CD4-positive, alpha-beta T cell (primary cell): ENCODE measurements at regions of chr11 and their contacts with region 1.

Region 1: GRCh38 chr11:18526521-18527296 is at the start of gene TSG101:
- DNase-seq: peak; percentile 86 to 96 (median 89)
- ATAC-seq: peak; percentile 82
- H3K4me3 ChIP-seq: peak within 1 kb of the TSS; percentile 88
- H3K4me3 Mint-ChIP-seq: peak within 1 kb of the TSS; percentile 100
- H3K27ac ChIP-seq: peak within 1 kb of the TSS; percentile 99 to 100
- H3K27ac Mint-ChIP-seq: peak within 1 kb of the TSS; percentile 100
- H3K4me1 ChIP-seq: peaks cover 31% of the 10 kb centered on the region
- H3K4me1 Mint-ChIP-seq: peaks cover 70% of the 10 kb centered on the region
- H3K27me3 ChIP-seq: no peaks in the 10 kb centered on the region
- H3K27me3 Mint-ChIP-seq: no peaks in the 10 kb centered on the region
- CTCF ChIP-seq: no peak
- total RNA-seq, gene TSG101: 23.5 to 30.1 TPM

Region 2: DNA sequence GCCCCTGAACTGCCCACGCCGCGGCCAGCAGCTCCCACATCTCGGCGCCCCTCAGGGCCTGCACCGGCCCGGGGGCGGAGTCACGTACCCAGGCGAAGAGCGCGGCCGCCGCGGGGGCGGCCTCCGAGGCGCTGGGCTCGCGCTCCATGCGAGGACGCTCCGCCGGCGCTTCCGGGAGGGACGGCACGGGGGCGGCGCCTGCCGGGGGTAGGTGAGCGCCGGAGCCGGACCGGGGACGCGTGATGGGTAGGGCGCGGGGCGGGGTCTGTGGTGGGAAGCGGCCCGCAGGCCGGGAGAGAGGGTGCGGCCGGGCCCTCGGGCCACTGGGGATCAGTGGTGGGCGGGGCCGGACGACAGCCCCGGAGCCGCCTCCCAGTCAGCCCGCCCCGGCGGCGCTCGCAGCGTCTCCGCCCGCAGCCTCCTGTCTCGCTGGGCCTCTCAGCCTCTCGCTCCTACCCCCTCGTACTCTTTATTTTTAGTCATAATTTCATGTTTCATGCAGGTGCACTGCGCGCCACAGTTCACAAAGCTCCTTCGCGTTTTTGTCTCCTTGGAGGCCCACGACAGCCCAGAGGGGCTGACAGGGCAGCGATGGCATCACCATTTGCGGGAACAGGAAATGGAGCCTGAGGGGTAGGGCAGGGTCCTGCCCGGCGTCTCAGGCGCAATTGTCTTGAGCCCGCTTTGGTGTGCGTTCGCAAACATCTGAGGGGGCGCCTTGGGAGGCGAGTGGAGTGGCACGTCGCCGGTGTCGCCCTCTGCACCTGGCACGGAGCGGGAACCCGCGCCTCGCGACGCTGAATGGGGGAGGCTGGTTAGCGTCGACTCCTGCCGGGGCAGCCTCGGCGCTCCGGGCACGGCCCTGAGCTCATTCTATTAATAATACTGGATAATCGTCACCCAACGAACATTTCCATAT is 513.6 kb before region 1 on chr11 and contains the start of gene SERGEF:
- CTCF ChIA-PET with region 1: no interaction called
- POLR2A ChIA-PET with region 1: interaction called, 6 read pairs
- intact Hi-C with region 1: loop called in 1 of 2 experiments (anchors 5 kb)
- DNase-seq: peak; percentile 79 to 97 (median 93)
- ATAC-seq: peak; percentile 80
- H3K4me3 ChIP-seq: peak within 1 kb of the TSS; percentile 98
- H3K4me3 Mint-ChIP-seq: peak within 1 kb of the TSS; percentile 98
- H3K27ac ChIP-seq: peak within 1 kb of the TSS; percentile 82 to 83
- H3K27ac Mint-ChIP-seq: peak within 1 kb of the TSS; percentile 92
- H3K4me1 ChIP-seq: peaks cover 22% of the 10 kb centered on the region
- H3K4me1 Mint-ChIP-seq: peaks cover 33% of the 10 kb centered on the region
- H3K27me3 ChIP-seq: no peaks in the 10 kb centered on the region
- H3K27me3 Mint-ChIP-seq: no peaks in the 10 kb centered on the region
- CTCF ChIP-seq: no peak
- total RNA-seq, gene SERGEF: 35.2 to 37.1 TPM

Region 3: GRCh38 chr11:18321980-18322711 is 204.6 kb before region 1 on chr11 and contains the starts of genes GTF2H1 and HPS5:
- CTCF ChIA-PET with region 1: interaction called, 3 read pairs
- POLR2A ChIA-PET with region 1: interaction called, 36 read pairs
- intact Hi-C with region 1: loop called (anchors 1 to 2 kb)
- DNase-seq: peak; percentile 90 to 99 (median 93)
- ATAC-seq: peak; percentile 87
- H3K4me3 ChIP-seq: peak within 1 kb of the TSS; percentile 74
- H3K4me3 Mint-ChIP-seq: peak within 1 kb of the TSS; percentile 94
- H3K27ac ChIP-seq: peak within 1 kb of the TSS; percentile 97 to 98
- H3K27ac Mint-ChIP-seq: peak within 1 kb of the TSS; percentile 99
- H3K4me1 ChIP-seq: peaks cover 25% of the 10 kb centered on the region
- H3K4me1 Mint-ChIP-seq: peaks cover 87% of the 10 kb centered on the region
- H3K27me3 ChIP-seq: no peaks in the 10 kb centered on the region
- H3K27me3 Mint-ChIP-seq: no peaks in the 10 kb centered on the region
- CTCF ChIP-seq: no peak
- total RNA-seq, gene GTF2H1: 15.1 to 17.7 TPM
- total RNA-seq, gene HPS5: 8.8 to 9.3 TPM

Region 4: DNA sequence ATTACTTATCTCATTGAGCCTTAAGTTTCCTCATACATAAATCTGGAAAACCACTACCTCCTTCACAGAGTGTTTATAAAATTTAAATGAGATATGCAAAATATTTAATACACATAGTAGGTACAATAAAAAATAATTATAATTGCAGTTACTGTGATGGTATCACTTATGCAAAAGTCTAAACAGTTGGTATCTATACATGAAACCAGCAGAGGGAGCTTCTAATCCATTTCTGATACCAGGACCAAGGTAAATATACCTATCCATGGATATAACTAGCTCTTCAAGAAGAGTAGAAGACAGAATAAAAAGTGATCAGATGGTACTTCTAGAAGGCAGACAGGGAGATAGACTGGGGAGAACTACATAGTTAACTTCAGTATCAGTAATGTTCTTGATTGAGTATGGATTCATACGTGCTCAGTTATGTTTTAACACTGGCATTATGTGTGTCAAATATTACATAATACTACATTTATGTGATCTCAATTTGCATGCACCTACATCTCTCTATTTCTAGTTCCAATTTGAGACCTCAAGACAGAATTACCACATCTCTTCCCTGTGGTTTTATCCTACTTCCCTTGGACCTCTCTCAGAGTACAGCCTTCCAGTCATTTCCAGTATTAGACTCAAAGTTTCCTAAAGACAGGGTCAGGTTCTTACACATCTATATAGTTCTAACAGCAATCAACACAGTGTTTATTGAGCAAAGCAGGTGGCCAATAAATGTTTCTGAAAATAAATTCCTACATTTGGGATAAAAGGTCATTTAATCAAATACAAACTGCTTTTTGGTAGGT is 13.7 kb after region 1 on chr11:
- CTCF ChIA-PET with region 1: interaction called, 7 read pairs
- POLR2A ChIA-PET with region 1: interaction called, 11 read pairs
- intact Hi-C with region 1: no loop called
- DNase-seq: peak in 3 of 14 experiments; percentile 65 to 71 (median 66)
- ATAC-seq: peak; percentile 77
- H3K4me3 ChIP-seq: no peak overlapping the region
- H3K4me3 Mint-ChIP-seq: no peak overlapping the region
- H3K27ac ChIP-seq: no peak overlapping the region
- H3K27ac Mint-ChIP-seq: peak overlapping the region; percentile 21
- H3K4me1 ChIP-seq: no peaks in the 10 kb centered on the region
- H3K4me1 Mint-ChIP-seq: no peaks in the 10 kb centered on the region
- H3K27me3 ChIP-seq: no peaks in the 10 kb centered on the region
- H3K27me3 Mint-ChIP-seq: no peaks in the 10 kb centered on the region
- CTCF ChIP-seq: peak; percentile 79

Region 5: DNA sequence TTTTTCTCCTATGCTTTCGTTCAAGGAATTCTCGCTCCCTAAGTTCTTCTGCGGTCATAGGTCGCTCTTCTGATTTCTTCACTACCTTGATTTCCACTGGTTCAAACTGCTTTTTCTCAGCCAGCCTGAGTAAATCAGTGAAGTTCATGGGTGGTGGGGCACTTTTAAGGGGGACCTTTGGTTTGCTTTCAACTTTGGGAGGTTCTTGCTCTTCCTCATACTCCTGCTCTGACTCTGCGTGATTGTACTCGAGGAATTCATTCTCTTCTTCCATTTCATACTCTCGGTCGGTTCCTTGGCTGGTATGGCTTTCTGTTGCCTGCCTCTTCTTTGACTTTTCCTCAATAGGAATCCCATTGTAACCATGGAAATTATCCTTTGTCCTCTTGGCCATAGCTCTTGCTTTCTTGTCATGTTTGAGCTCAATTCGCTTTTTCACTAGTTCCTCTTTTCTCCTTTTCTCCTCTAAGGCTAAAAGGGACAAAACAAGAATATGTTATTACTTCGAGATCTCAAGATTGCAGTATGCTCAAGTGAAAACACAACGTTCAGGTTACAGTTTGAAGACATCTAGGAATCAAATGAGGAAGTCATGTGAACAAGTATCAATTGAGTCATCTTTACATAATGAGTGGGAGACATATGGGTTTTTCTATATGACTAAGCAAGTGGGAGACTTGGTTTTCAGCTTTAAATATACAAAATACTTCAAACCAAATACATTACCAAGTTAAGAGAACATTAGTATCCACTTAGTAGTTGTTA is 89.1 kb after region 1 on chr11:
- CTCF ChIA-PET with region 1: no interaction called
- POLR2A ChIA-PET with region 1: interaction called, 12 read pairs
- intact Hi-C with region 1: no loop called
- DNase-seq: peak in 3 of 14 experiments; percentile 17 to 41 (median 36)
- ATAC-seq: no peak
- H3K4me3 ChIP-seq: no peak overlapping the region
- H3K4me3 Mint-ChIP-seq: no peak overlapping the region
- H3K27ac ChIP-seq: no peak overlapping the region
- H3K27ac Mint-ChIP-seq: no peak overlapping the region
- H3K4me1 ChIP-seq: peaks cover 31% of the 10 kb centered on the region
- H3K4me1 Mint-ChIP-seq: peaks cover 52% of the 10 kb centered on the region
- H3K27me3 ChIP-seq: no peaks in the 10 kb centered on the region
- H3K27me3 Mint-ChIP-seq: no peaks in the 10 kb centered on the region
- CTCF ChIP-seq: no peak

Region 6: DNA sequence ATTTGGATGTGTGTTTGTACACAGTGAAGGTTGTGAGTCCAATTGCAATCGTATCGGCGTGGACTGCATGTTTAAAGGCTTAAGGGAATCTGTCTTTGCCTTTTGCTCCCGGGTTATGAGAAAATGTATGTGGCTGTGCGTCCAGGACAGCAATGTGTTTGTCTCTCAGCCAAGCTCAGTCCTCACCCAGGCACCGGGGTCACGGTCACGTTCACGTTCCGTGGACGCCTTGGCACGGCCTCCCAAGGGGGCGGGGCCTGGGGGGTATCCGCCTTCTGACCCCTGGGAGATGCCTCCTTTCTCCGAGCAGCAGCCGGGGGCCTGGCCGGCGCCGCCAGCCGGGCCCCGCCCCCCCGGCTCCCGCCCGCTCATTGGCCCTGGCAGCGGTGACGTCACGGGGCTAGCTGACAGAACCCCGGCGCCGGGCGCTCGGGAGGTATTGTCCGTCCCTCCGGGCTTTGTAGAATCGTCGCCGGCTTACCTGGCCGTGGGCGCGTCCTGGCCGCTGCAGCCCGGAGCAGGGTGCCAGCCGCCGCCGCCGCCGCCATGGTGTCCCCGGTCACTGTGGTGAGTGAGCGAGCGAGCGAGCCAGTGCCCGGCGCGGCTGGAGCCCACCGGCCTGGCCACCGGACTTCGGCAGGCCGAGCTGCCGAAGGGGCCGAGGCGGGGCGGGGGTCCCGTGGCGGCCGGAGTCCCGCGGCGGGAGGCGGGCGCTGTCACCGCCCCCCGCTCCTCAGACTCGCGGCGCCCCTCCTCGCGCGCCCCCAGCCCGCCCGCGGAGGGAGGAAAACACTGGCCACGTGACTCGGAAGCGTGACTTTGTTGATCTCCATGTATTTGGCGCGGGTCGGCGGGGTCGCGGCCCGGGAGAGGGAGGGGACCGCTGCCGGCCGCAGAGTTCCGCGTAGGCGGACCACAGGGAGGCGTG is 171.9 kb after region 1 on chr11 and contains the start of gene TMEM86A:
- CTCF ChIA-PET with region 1: no interaction called
- POLR2A ChIA-PET with region 1: interaction called, 15 read pairs
- intact Hi-C with region 1: no loop called
- DNase-seq: peak; percentile 78 to 96 (median 88)
- ATAC-seq: peak; percentile 92
- H3K4me3 ChIP-seq: peak within 1 kb of the TSS; percentile 60
- H3K4me3 Mint-ChIP-seq: peak within 1 kb of the TSS; percentile 89
- H3K27ac ChIP-seq: peak within 1 kb of the TSS; percentile 47 to 54
- H3K27ac Mint-ChIP-seq: peak within 1 kb of the TSS; percentile 70
- H3K4me1 ChIP-seq: peaks cover 26% of the 10 kb centered on the region
- H3K4me1 Mint-ChIP-seq: peaks cover 14% of the 10 kb centered on the region
- H3K27me3 ChIP-seq: no peaks in the 10 kb centered on the region
- H3K27me3 Mint-ChIP-seq: no peaks in the 10 kb centered on the region
- CTCF ChIP-seq: no peak
- total RNA-seq, gene TMEM86A: 8.0 to 8.5 TPM

Region 7: GRCh38 chr11:19116971-19117750 is 590.5 kb after region 1 on chr11 and contains the start of gene ZDHHC13:
- CTCF ChIA-PET with region 1: no interaction called
- POLR2A ChIA-PET with region 1: no interaction called
- intact Hi-C with region 1: loop called in 1 of 2 experiments (anchors 10 kb)
- DNase-seq: peak; percentile 84 to 97 (median 92)
- ATAC-seq: peak; percentile 99
- H3K4me3 ChIP-seq: peak within 1 kb of the TSS; percentile 94
- H3K4me3 Mint-ChIP-seq: peak within 1 kb of the TSS; percentile 92
- H3K27ac ChIP-seq: no peak within 1 kb of the TSS
- H3K27ac Mint-ChIP-seq: peak within 1 kb of the TSS; percentile 80
- H3K4me1 ChIP-seq: peaks cover 29% of the 10 kb centered on the region
- H3K4me1 Mint-ChIP-seq: peaks cover 58% of the 10 kb centered on the region
- H3K27me3 ChIP-seq: no peaks in the 10 kb centered on the region
- H3K27me3 Mint-ChIP-seq: no peaks in the 10 kb centered on the region
- CTCF ChIP-seq: no peak
- total RNA-seq, gene ZDHHC13: 3.6 to 6.6 TPM